Activated CD4-positive, alpha-beta T cell treated with anti-CD3 and anti-CD28 coated beads, Interleukin-2, amount 10 ng/mL, durations not matched to agents 24 days and 14 days (primary cell): ENCODE measurements at regions of chr6 and their contacts with region 1.

Region 1: GRCh38 chr6:33711140-33712129 is at the start of gene UQCC2:
- DNase-seq: peak; percentile 99
- H3K4me3 Mint-ChIP-seq: peak within 1 kb of the TSS; percentile 97
- H3K27ac Mint-ChIP-seq: peak within 1 kb of the TSS; percentile 98
- H3K4me1 Mint-ChIP-seq: peaks cover 36% of the 10 kb centered on the region
- H3K27me3 Mint-ChIP-seq: peaks cover 4% of the 10 kb centered on the region
- total RNA-seq, gene UQCC2: 131 and 137 TPM in 2 replicates

Region 2: DNA sequence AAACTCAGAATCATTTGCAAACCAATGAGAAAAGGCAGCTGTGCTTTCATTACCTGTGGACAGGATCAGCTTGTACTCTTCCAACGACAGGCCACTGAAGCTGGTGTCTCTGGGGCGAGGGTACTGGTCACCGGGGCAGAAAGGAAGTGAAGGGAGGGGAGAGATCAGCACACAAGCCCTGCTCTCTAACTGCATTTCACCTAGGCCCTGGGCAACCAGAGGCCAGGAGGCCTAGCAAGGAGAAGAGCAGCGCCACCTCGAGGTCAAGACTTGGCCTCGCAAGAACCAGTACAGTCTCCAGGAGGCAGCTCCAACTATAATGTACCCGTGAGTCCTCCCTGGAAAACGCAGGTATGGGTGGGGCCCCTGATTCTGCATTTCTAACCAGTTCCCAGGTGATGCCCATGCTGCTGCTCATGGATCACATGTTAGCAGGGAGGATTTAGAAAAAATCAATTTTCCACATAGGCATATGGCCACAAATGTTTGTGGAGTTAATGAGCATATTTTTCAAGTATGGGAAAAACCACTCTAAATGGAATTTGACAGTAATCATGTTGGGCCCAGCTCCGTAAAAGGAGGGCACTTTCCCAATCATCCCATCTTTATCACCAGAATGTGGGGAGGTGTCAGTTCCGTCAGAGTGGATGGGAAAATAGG is 10.9 kb before region 1 on chr6:
- intact Hi-C with region 1: loop called (anchors 2 kb)
- DNase-seq: peak; percentile 93
- H3K4me3 Mint-ChIP-seq: no peak overlapping the region
- H3K27ac Mint-ChIP-seq: peak overlapping the region; percentile 87
- H3K4me1 Mint-ChIP-seq: peaks cover 38% of the 10 kb centered on the region
- H3K27me3 Mint-ChIP-seq: no peaks in the 10 kb centered on the region

Region 3: DNA sequence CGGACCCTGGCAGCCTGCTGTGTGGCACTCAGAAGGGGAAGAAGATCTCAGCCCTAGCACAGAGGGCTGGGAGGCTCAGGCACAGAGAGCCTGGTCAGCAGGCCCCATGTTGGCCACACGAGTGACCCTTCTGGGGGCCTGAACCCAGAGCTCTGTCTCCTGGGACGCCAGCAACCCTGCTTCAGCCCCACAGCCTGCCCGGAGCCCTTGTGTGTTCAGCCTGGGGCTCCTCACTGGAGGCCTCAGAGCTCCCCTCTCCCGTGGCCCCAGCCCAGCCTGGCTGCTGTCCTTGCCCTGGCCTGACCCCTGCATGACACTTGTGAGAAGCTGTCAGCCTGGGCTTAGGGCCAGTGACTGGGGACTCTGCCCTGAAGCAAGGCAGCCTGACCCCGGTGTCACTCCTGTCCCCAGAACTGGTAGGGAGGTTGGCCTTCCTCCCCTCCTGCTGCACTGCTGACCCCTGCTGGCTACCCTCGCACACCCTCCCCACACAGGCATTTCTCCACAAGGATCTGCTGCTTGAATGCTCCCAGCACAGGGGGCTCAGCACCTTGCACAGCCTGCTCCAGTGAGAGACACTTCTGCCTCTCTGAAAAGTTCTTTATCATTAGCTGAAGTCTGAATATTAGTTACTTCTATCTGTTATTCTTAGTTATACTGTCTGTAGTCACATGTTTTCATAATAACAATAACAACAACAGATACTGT is 50.6 kb after region 1 on chr6:
- intact Hi-C with region 1: loop called (anchors 5 kb)
- DNase-seq: peak; percentile 83
- H3K4me3 Mint-ChIP-seq: no peak overlapping the region
- H3K27ac Mint-ChIP-seq: no peak overlapping the region
- H3K4me1 Mint-ChIP-seq: peaks cover 3% of the 10 kb centered on the region
- H3K27me3 Mint-ChIP-seq: peaks cover 5% of the 10 kb centered on the region

Region 4: GRCh38 chr6:33788694-33789549 is 77.5 kb after region 1 on chr6 and contains the start of gene LEMD2:
- intact Hi-C with region 1: loop called (anchors 1 kb)
- DNase-seq: peak; percentile 99
- H3K4me3 Mint-ChIP-seq: peak within 1 kb of the TSS; percentile 88
- H3K27ac Mint-ChIP-seq: peak within 1 kb of the TSS; percentile 93
- H3K4me1 Mint-ChIP-seq: peaks cover 40% of the 10 kb centered on the region
- H3K27me3 Mint-ChIP-seq: peaks cover 18% of the 10 kb centered on the region
- total RNA-seq, gene LEMD2: 64.3 and 66.4 TPM in 2 replicates